Dorsolateral prefrontal cortex (tissue), 120 donors: ENCODE measurements at regions of chr11 and their contacts with region 1.

Region 1: GRCh38 chr11:12331239-12331874 is 46.0 kb upstream of the PARVA start:
- DNase-seq: peak; percentile 69 to 92 (median 84)
- H3K4me3 ChIP-seq: peak overlapping the region in 20 of 59 donors; percentile 0 to 48 (median 23)
- H3K27ac ChIP-seq: peak overlapping the region in 16 of 59 donors; percentile 11 to 73 (median 60)
- H3K27me3 ChIP-seq: peaks cover 0 to 11% (median 0%) of the 10 kb centered on the region in 45 donors
- CTCF ChIP-seq: peak; percentile 77 to 97 (median 88)

Region 2: GRCh38 chr11:12182676-12183541 is 148.4 kb before region 1 on chr11:
- intact Hi-C with region 1: no loop called
- DNase-seq: no peak
- H3K4me3 ChIP-seq: no peak overlapping the region
- H3K27ac ChIP-seq: peak overlapping the region in 6 of 59 donors; percentile 9 to 66 (median 28)
- H3K27me3 ChIP-seq: no peaks in the 10 kb centered on the region
- CTCF ChIP-seq: no peak

Region 3: GRCh38 chr11:12288212-12288930 is 43.0 kb before region 1 on chr11:
- intact Hi-C with region 1: loop called in 1 of 2 experiments (anchors 5 kb)
- DNase-seq: peak in 9 of 10 donors; percentile 62 to 87 (median 82)
- H3K4me3 ChIP-seq: no peak overlapping the region
- H3K27ac ChIP-seq: peak overlapping the region in 16 of 59 donors; percentile 12 to 69 (median 58)
- H3K27me3 ChIP-seq: peaks cover 0 to 11% (median 0%) of the 10 kb centered on the region in 45 donors
- CTCF ChIP-seq: peak; percentile 40 to 95 (median 88)

Region 4: DNA sequence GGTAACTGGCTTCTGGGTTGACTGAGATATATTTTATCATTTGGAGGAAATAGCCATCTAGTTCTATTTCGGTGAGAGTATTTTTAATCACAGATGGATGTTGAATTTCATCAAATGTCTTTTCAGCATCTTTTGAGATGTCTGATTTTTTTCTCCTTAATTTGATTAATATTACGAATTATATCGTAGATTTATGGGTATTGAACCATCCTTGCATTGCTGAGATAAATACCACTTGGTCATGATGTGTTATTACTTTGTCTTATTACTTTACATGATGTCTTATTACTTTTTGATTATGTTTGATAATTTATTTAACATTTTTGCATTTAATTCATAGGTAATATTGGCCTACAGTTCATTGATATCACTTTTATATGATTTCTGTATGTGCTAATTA is 32.7 kb before region 1 on chr11:
- intact Hi-C with region 1: no loop called
- DNase-seq: no peak
- H3K4me3 ChIP-seq: no peak overlapping the region
- H3K27ac ChIP-seq: no peak overlapping the region
- H3K27me3 ChIP-seq: peaks cover 0 to 4% (median 0%) of the 10 kb centered on the region in 45 donors
- CTCF ChIP-seq: no peak

Region 5: GRCh38 chr11:12888525-12889158 is 557.3 kb after region 1 on chr11:
- intact Hi-C with region 1: loop called (anchors 2 kb)
- DNase-seq: peak; percentile 48 to 90 (median 68)
- H3K4me3 ChIP-seq: no peak overlapping the region
- H3K27ac ChIP-seq: peak overlapping the region in 29 of 59 donors; percentile 1 to 76 (median 43)
- H3K27me3 ChIP-seq: no peaks in the 10 kb centered on the region
- CTCF ChIP-seq: peak; percentile 38 to 88 (median 78)